Activated naive CD4-positive, alpha-beta T cell treated with anti-CD3 and anti-CD28 coated beads for 36 hours (primary cell): ENCODE measurements at regions of chr10 and their contacts with region 1.

Region 1: DNA sequence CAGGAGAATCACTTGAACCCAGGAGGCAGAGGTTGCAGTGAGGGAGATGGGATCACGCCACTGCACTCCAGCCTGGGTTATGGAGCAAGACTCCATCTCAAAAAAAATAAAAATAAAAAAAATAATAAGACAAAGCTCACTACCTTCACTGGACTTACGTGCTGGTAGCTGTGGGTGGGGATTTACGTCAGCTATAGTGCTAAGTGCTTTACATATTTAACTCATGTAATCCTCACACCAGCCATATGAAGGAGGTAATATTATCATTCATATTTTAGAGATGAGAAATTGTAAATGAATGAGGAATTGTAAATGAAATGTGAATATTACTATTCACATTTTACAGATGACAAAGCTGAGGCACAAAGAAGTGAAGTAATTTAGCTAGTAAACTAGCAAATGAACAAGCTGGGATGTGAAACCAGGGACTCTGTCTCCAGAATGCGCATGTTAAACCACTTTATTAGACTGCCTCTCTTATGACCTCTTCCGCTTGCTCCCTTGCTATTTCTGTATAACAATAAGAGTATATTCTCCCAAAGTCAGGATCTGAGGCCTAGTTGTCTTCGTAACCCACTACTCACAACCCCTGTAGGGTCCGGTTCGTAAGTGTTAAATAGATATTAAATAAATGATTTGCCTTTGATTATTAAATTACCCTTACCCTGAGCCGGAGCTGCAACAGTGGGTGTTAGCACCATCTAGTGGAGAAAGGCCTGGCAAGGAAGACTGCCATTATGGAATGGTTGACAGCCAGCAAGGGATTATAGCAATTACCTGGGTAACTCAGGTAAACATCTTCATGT is 70.2 kb downstream of the HTR7 start:
- DNase-seq: peak; percentile 48
- H3K4me3 Mint-ChIP-seq: no peak overlapping the region
- H3K27ac Mint-ChIP-seq: no peak overlapping the region
- H3K4me1 Mint-ChIP-seq: no peaks in the 10 kb centered on the region
- H3K27me3 Mint-ChIP-seq: peaks cover 4% of the 10 kb centered on the region

Region 2: GRCh38 chr10:90148116-90148855 is 639.3 kb before region 1 on chr10:
- CTCF ChIA-PET with region 1: no interaction called
- intact Hi-C with region 1: loop called (anchors 5 kb)
- DNase-seq: no peak
- H3K4me3 Mint-ChIP-seq: no peak overlapping the region
- H3K27ac Mint-ChIP-seq: no peak overlapping the region
- H3K4me1 Mint-ChIP-seq: no peaks in the 10 kb centered on the region
- H3K27me3 Mint-ChIP-seq: no peaks in the 10 kb centered on the region

Region 3: DNA sequence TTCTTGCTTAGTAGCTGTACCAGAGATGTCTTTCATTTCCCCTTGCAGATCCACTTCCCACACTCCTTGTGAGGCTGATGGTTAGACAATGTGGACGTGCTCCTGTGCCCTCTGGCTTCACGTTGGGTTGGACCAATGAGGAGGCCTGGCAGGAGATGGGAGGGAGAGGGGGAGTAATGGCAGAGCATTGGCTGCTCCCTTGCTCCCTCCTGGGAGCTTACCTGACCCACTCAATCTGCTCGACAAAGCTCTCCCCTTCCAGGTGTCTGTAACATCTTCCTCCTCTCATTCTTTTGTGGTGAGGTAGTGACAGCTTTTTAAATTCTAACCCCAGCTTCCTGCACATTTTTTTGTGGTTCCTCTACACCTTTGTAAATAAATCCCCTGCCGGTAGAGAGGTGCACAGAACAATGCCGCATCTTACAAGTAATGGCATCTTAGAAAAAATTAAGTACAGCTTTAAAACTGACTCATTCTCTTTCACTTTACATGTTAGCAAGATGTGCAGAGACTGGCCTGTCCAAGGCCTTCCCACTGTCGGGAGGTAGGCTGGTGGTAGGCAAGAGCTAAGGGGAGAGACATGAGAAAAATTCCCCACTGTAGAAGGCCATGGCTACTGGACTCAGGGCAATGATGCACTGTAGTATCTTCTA is 64.1 kb before region 1 on chr10:
- CTCF ChIA-PET with region 1: interaction called, 10 read pairs
- intact Hi-C with region 1: no loop called
- DNase-seq: peak; percentile 8
- H3K4me3 Mint-ChIP-seq: no peak overlapping the region
- H3K27ac Mint-ChIP-seq: no peak overlapping the region
- H3K4me1 Mint-ChIP-seq: peaks cover 13% of the 10 kb centered on the region
- H3K27me3 Mint-ChIP-seq: no peaks in the 10 kb centered on the region

Region 4: DNA sequence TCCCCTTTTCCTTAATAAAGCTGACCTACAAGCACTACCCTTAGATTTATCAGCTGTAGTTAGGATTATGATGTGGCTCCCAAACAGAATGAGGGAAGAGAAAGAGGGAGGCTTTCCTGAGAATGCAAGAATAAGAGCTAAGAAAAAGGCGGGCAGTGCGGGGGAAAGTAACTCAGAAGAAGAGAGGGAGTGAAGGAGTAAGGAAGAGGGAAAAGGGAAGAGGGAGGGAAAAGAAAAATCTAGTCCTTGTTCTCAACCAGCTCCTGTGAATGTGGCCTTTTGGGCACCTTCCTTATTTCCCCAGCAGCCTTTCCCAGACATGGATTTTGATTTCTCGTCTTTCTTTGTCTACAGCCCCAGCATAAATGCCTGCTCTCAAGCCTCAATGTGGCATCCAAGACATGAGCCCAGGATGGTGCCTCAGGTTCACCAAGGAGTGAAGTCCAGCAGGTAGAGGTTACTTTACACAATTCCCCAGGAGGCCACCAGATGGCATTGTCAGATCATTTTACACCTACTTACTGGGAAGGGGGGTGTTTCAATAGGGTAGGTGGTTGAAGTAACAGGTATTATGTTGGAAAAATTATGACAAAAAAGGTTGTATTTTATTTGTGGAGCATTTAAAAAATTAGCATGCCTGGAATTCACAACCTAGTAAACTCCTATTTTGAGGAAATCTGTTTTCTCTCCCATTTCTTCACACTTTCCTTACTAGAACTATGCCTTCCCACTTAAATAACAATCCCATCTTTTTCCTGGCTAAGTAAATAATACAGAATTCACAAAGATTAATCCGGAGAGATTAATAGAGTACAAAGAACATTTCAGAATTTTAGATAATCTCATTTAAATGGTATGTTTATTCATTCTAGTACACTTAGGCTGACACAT is 36.2 kb before region 1 on chr10:
- CTCF ChIA-PET with region 1: interaction called, 13 read pairs
- intact Hi-C with region 1: loop called (anchors 1 kb)
- DNase-seq: peak; percentile 68
- H3K4me3 Mint-ChIP-seq: no peak overlapping the region
- H3K27ac Mint-ChIP-seq: no peak overlapping the region
- H3K4me1 Mint-ChIP-seq: no peaks in the 10 kb centered on the region
- H3K27me3 Mint-ChIP-seq: peaks cover 26% of the 10 kb centered on the region

Region 5: DNA sequence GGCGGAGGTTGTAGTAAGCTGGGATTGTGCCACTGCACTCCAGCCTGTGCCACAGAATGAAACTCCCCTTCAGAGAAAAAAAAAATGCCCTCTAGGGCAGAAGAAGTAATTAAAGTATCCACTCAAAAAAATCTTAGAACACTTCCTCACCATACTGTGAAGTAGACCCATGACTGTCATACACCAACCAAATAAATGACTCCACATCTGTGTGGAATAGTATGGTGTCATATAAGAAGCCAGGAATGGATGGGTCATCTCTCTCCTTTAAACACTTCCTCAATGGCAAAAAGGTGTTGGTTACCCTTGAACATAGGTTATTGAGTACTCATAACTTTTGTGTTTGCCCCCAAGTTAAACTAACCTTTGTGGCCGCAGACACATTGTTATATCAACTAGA is 384.8 kb after region 1 on chr10:
- CTCF ChIA-PET with region 1: no interaction called
- intact Hi-C with region 1: no loop called
- DNase-seq: no peak
- H3K4me3 Mint-ChIP-seq: no peak overlapping the region
- H3K27ac Mint-ChIP-seq: no peak overlapping the region
- H3K4me1 Mint-ChIP-seq: peaks cover 28% of the 10 kb centered on the region
- H3K27me3 Mint-ChIP-seq: no peaks in the 10 kb centered on the region